ENCODE measurements at regions of chr10 and their contacts with region 1.

Region 1: DNA sequence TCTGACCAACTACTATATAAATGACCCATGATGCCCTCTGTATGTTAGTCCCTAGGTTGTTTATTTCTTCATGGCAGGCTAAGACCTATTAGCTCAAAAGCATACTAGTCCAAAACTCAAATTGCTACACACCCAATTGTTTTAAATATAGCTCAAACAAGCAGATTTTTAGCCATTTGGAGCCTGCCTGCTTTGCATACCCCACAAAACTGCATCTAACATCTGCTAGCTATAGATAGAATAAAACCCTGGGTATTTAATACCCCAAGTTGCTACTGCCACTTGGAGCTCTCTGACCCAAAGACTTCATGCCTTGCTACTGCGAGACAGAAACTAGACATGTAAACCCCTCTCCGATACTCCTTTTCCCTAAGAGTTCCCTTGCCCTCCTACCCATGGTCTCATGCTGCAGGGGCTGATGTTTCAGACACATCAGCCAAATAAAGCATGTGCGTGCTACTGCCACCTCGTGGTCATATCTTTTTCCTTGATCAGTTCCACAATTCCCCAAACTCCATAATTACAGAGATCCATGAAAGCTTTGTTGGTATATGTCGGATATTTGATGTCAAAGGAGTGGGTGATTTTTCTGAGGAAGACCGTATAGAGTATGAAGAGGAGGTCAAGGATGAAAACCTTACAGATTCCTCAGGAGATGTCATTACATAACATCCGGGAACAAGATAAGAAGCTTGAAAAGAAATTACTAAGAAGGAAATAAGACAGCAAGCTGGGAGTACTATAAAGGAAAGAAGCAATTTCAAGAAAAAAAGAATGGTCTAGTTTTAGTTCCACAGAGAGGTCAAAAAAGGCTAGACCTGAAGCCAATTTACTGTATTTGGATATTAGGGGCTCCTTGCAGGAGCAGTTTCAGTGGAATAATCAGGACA is 386.6 kb downstream of the SH2D4B start:
- DNase-seq: peak; percentile 64
- H3K4me3 Mint-ChIP-seq: no peak overlapping the region
- H3K27ac Mint-ChIP-seq: no peak overlapping the region
- H3K4me1 Mint-ChIP-seq: no peaks in the 10 kb centered on the region
- H3K27me3 Mint-ChIP-seq: peaks cover 48% of the 10 kb centered on the region
- CTCF ChIP-seq: peak; percentile 56

Region 2: GRCh38 chr10:80382989-80383388 is 541.3 kb before region 1 on chr10:
- CTCF ChIA-PET with region 1: interaction called, 3 read pairs
- POLR2A ChIA-PET with region 1: no interaction called
- intact Hi-C with region 1: loop called (anchors 2 kb)
- DNase-seq: peak; percentile 57
- H3K4me3 Mint-ChIP-seq: no peak overlapping the region
- H3K27ac Mint-ChIP-seq: no peak overlapping the region
- H3K4me1 Mint-ChIP-seq: peaks cover 5% of the 10 kb centered on the region
- H3K27me3 Mint-ChIP-seq: no peaks in the 10 kb centered on the region
- CTCF ChIP-seq: peak; percentile 75

Region 3: DNA sequence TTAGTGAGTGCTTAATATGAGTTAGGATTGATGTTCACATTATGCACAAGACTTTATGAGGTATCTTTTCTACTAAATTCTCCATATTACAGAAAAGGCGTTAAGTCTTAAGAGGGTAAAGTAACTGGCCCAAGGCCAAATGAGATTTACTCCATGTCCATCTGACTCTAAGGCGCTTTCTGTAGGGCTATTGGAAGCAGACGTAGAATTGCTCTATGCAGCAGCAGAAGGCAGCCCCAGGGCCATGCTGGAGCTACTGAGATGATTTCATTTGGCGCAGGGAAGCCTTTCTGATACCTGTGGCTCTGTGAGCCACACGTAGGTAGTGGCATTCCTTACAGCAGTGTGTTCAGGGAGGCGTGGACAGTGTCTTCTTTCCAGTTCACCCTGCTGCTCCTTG is 253.5 kb before region 1 on chr10:
- CTCF ChIA-PET with region 1: interaction called, 13 read pairs
- POLR2A ChIA-PET with region 1: no interaction called
- intact Hi-C with region 1: no loop called
- DNase-seq: no peak
- H3K4me3 Mint-ChIP-seq: no peak overlapping the region
- H3K27ac Mint-ChIP-seq: no peak overlapping the region
- H3K4me1 Mint-ChIP-seq: no peaks in the 10 kb centered on the region
- H3K27me3 Mint-ChIP-seq: peaks cover 25% of the 10 kb centered on the region
- CTCF ChIP-seq: no peak

Region 4: GRCh38 chr10:80855348-80855971 is 68.8 kb before region 1 on chr10:
- CTCF ChIA-PET with region 1: interaction called, 18 read pairs
- POLR2A ChIA-PET with region 1: no interaction called
- intact Hi-C with region 1: no loop called
- DNase-seq: peak; percentile 22
- H3K4me3 Mint-ChIP-seq: no peak overlapping the region
- H3K27ac Mint-ChIP-seq: no peak overlapping the region
- H3K4me1 Mint-ChIP-seq: no peaks in the 10 kb centered on the region
- H3K27me3 Mint-ChIP-seq: peaks cover 49% of the 10 kb centered on the region
- CTCF ChIP-seq: peak; percentile 46

Region 5: DNA sequence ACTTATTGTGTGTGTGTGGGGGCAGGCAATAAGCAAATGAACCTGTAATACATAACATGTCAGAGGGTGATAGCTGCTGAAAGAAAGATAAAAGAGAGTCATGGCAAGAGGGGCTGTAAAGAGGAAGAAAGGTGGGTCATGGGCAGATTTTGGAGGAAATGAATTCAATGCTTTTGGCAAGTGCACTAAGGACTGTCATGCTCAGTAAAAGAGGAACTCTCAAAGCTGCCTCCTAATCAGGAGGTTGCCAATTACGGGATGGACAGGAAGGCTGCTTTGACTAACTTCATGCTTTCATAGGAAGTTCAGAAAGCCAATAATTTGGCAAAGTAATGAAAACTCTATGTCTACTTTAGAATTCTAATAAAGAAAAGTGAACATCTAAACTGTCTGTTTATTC is 14.6 kb after region 1 on chr10:
- CTCF ChIA-PET with region 1: interaction called, 16 read pairs
- POLR2A ChIA-PET with region 1: no interaction called
- intact Hi-C with region 1: no loop called
- DNase-seq: no peak
- H3K4me3 Mint-ChIP-seq: no peak overlapping the region
- H3K27ac Mint-ChIP-seq: no peak overlapping the region
- H3K4me1 Mint-ChIP-seq: no peaks in the 10 kb centered on the region
- H3K27me3 Mint-ChIP-seq: peaks cover 89% of the 10 kb centered on the region
- CTCF ChIP-seq: no peak

Region 6: GRCh38 chr10:81018708-81019365 is 94.5 kb after region 1 on chr10:
- CTCF ChIA-PET with region 1: interaction called, 24 read pairs
- POLR2A ChIA-PET with region 1: no interaction called
- intact Hi-C with region 1: no loop called
- DNase-seq: peak; percentile 64
- H3K4me3 Mint-ChIP-seq: no peak overlapping the region
- H3K27ac Mint-ChIP-seq: no peak overlapping the region
- H3K4me1 Mint-ChIP-seq: peaks cover 7% of the 10 kb centered on the region
- H3K27me3 Mint-ChIP-seq: peaks cover 29% of the 10 kb centered on the region
- CTCF ChIP-seq: peak; percentile 77

Region 7: GRCh38 chr10:81081887-81082620 is 157.7 kb after region 1 on chr10:
- CTCF ChIA-PET with region 1: no interaction called
- POLR2A ChIA-PET with region 1: no interaction called
- intact Hi-C with region 1: no loop called
- DNase-seq: peak; percentile 33
- H3K4me3 Mint-ChIP-seq: no peak overlapping the region
- H3K27ac Mint-ChIP-seq: no peak overlapping the region
- H3K4me1 Mint-ChIP-seq: no peaks in the 10 kb centered on the region
- H3K27me3 Mint-ChIP-seq: peaks cover 47% of the 10 kb centered on the region
- CTCF ChIP-seq: peak; percentile 44

Measured in MCF 10A (cell line).